ENCODE measurements at regions of chr2 and their contacts with region 1.

Region 1: DNA sequence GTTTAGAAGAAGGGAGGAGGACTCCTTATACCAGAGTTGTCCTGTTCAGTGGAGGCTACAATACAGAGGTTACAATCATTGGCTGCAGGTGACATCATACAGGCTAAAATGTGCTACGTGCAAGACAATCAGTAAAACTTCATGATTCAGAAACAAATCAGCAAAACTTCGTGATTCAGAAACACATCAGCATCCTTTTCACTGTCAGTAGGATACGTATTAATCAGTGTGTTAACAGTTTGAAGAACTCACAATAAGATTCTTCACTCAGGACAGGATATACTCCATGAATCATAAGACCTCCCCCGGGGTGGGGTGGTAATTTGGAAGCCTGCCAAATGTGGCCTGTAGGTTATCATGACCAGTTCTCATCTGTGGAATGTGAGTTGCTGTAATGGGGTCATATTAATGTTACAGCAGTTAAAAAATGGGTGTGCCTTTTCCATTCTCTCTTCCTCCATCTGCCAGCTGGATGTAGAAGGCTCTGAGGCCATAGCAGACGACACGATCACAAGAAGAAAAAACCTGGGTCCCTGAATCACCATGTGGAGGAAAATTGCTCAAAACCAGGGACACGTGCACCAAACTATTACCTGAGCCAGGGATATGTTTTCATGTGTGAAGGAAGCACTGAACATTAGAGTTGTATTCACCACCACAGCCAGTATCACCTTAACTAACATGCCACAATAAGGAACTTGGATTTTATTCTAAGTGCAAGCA is 134.8 kb upstream of the CREB1 start:
- DNase-seq: peak; percentile 99
- ATAC-seq: peak; percentile 86
- H3K4me3 ChIP-seq: peak overlapping the region; percentile 40
- H3K27ac ChIP-seq: peak overlapping the region; percentile 99
- H3K4me1 ChIP-seq: peaks cover 23% of the 10 kb centered on the region
- H3K27me3 ChIP-seq: no peaks in the 10 kb centered on the region
- CTCF ChIP-seq: no peak

Region 2: GRCh38 chr2:207188626-207189419 is 206.2 kb before region 1 on chr2:
- CTCF ChIA-PET with region 1: no interaction called
- POLR2A ChIA-PET with region 1: no interaction called
- intact Hi-C with region 1: loop called (anchors 2 kb)
- DNase-seq: peak; percentile 80
- ATAC-seq: peak; percentile 96
- H3K4me3 ChIP-seq: no peak overlapping the region
- H3K27ac ChIP-seq: no peak overlapping the region
- H3K4me1 ChIP-seq: peaks cover 27% of the 10 kb centered on the region
- H3K27me3 ChIP-seq: no peaks in the 10 kb centered on the region
- CTCF ChIP-seq: no peak

Region 3: DNA sequence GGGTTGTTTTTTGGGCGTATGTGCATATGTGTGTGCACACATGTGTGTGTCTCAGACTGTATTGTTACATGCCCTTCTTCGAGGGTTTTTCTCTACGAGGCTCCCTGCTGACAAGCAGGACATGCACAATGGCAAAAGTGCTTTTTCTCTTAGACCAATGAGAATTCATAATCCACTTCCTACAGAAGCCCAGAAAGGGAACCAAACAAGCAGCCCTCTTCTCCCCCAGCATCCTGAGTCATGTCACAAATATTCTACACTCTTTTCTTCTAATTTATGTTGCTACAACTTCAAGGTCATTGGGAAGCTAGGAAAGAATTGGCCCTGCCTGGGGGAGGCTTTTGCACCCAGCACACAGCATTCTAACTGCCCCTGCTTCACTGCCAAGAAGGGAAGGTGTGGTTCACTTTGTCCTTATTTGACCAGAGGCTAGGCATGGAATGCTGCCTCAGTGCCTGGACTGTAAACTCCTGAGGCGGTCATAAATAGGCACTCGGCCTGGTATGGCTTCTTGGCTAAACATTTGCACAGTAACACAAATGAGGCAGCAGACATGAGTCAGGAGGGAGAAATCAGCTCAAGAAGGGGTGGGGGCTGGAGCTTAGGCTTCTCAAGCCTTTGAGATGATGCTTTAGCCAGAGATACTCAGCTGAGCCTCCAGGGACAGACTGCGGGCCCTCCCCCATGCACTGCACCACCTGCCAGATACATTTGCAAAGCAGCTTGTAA is 136.5 kb before region 1 on chr2:
- CTCF ChIA-PET with region 1: no interaction called
- POLR2A ChIA-PET with region 1: interaction called, 3 read pairs
- intact Hi-C with region 1: loop called (anchors 2 kb)
- DNase-seq: peak; percentile 96
- ATAC-seq: peak; percentile 76
- H3K4me3 ChIP-seq: no peak overlapping the region
- H3K27ac ChIP-seq: peak overlapping the region; percentile 55
- H3K4me1 ChIP-seq: peaks cover 82% of the 10 kb centered on the region
- H3K27me3 ChIP-seq: no peaks in the 10 kb centered on the region
- CTCF ChIP-seq: no peak

Region 4: DNA sequence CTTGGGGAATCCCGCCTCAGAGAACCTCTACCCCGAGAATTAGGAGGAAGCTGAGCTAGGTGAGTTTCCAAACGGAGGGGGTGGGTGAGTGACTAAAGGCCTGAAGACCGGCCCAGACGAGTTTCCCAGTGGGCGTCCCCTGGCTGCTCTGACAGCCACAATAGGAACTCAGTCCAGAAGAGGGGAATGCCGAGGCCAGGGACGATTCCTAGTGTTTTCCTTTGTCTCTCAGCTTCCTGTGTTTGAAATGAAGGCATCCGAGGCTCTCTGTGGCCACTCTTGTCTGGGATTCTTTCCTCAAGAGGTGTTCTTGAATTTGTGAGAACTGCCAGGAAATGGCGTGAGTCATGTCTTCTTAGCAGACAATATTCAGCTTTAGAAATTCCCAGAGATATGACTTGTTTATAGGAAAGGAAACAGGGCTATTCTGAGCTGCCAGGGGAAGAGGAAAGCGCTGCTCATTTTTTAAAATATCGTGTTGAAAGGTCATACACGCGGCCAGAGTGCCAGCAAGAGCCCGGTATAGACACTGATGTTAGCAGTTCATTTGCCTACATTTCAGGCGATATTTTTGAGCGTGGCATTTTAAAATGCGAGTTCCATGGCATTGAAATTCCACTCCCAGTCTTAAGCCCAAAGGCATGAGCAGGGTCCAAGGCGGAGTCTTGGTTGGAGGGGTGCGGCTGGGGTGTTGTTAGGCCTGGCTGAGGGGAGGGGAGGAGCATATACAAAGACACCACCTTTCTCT is 60.2 kb before region 1 on chr2:
- CTCF ChIA-PET with region 1: no interaction called
- POLR2A ChIA-PET with region 1: no interaction called
- intact Hi-C with region 1: loop called (anchors 2 kb)
- DNase-seq: peak; percentile 94
- ATAC-seq: peak; percentile 71
- H3K4me3 ChIP-seq: peak overlapping the region; percentile 57
- H3K27ac ChIP-seq: peak overlapping the region; percentile 92
- H3K4me1 ChIP-seq: peaks cover 55% of the 10 kb centered on the region
- H3K27me3 ChIP-seq: no peaks in the 10 kb centered on the region
- CTCF ChIP-seq: no peak

Region 5: GRCh38 chr2:207448006-207448405 is 53.0 kb after region 1 on chr2:
- CTCF ChIA-PET with region 1: no interaction called
- POLR2A ChIA-PET with region 1: no interaction called
- intact Hi-C with region 1: loop called (anchors 2 kb)
- DNase-seq: peak; percentile 29
- ATAC-seq: peak; percentile 67
- H3K4me3 ChIP-seq: no peak overlapping the region
- H3K27ac ChIP-seq: no peak overlapping the region
- H3K4me1 ChIP-seq: peaks cover 12% of the 10 kb centered on the region
- H3K27me3 ChIP-seq: no peaks in the 10 kb centered on the region
- CTCF ChIP-seq: no peak